K562 (cell line): ENCODE measurements at regions of chr5 and their contacts with region 1.

Region 1: DNA sequence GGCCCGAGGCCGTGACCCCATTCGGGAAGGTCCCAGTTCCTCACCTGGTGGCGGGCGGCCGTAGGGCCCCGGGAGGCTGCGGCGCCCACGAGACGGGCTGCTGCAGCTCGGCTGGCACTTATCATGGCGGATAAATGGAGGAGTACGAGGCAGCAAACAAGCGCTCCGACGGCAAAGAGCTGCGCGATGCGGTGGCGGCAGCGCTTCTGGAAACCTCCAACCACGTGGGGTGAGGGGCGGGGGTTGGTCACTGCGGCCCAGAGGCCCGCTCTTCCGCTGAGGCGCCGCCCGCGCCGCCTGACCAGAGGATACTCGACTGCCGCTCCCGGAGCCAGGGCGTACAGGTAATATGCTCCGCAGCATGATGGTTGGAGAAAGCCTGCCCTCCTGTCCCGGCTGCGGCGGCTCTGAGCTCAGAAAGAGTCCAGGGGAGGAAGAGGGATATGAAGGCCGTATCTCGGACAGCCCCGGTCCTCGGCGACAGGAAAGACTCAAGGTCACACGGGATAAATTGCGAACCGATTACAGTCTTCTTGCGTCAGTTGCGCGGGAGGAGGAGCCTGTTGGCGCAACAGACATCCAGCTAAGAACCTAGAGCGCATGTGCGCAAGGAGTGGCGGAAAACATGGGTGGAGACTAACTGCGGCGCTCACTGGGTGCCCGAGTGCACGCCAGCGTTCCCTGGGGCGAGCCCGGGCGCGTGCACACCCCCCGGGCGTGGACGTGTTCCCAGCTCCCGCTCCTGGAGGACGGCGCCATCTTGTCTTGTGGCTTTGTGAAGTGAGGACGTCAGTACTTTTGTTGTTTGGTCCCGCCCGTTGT is at the start of gene HSPA9:
- DNase-seq: peak; percentile 97 to 100 (median 98)
- ATAC-seq: peak; percentile 90
- H3K4me3 ChIP-seq: peak within 1 kb of the TSS; percentile 72
- H3K27ac ChIP-seq: peak within 1 kb of the TSS; percentile 97
- H3K4me1 ChIP-seq: peaks cover 11 to 21% of the 10 kb centered on the region in 2 experiments; a peak in 4 of 5 replicates
- H3K27me3 ChIP-seq: no peaks in the 10 kb centered on the region
- CTCF ChIP-seq: no peak; a peak in 1 of 6 replicates
- EP300 ChIP-seq: peak; percentile 88
- POLR2A ChIP-seq: peak; percentile 95
- RAD21 ChIP-seq: peak in 1 of 2 experiments; percentile 13; a peak in 1 of 4 replicates
- polyA plus RNA-seq, gene HSPA9: 195 to 294 TPM

Region 2: GRCh38 chr5:138542956-138543729 is 32.3 kb before region 1 on chr5 and contains the start of gene ETF1:
- CTCF ChIA-PET with region 1: no interaction called
- POLR2A ChIA-PET with region 1: interaction called, 18 read pairs
- in situ Hi-C with region 1: no loop called
- intact Hi-C with region 1: no loop called
- DNase-seq: peak; percentile 98 to 100 (median 99)
- ATAC-seq: peak; percentile 88
- H3K4me3 ChIP-seq: peak within 1 kb of the TSS; percentile 97
- H3K27ac ChIP-seq: peak within 1 kb of the TSS; percentile 97
- H3K4me1 ChIP-seq: peaks cover 7 to 36% of the 10 kb centered on the region in 2 experiments
- H3K27me3 ChIP-seq: no peaks in the 10 kb centered on the region
- CTCF ChIP-seq: 0 out of 6 replicates have a peak, but pooled peaks of 1 of the 3 experiments have one; percentile 8
- EP300 ChIP-seq: 0 out of 2 replicates have a peak, but pooled peaks have one; percentile 13
- POLR2A ChIP-seq: peak; percentile 94
- RAD21 ChIP-seq: no peak
- polyA plus RNA-seq, gene ETF1: 53.7 to 57.3 TPM

Region 3: DNA sequence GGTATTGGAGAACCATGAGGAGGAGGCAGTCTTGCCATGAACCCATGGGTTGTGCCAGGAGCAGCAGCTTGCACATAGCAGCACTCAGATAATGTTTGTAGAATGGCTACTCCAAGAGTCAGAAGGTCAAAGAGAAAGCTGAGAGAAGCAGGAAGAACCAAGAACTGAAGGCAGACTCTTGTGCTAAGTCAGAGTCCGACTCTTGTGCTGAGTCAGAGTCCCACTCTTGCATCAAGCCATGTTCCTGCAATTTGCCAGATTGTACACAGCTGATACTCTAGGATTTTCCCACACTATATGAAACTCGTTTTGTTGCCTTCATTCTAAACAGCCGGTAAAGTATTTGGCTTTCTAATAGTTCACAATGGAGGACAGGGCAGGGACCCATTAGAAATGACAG is 26.0 kb after region 1 on chr5:
- CTCF ChIA-PET with region 1: no interaction called
- POLR2A ChIA-PET with region 1: interaction called, 13 read pairs
- in situ Hi-C with region 1: no loop called
- intact Hi-C with region 1: no loop called
- DNase-seq: peak in 1 of 4 experiments; percentile 48
- ATAC-seq: peak; percentile 87
- H3K4me3 ChIP-seq: no peak overlapping the region
- H3K27ac ChIP-seq: no peak overlapping the region
- H3K4me1 ChIP-seq: peaks cover 0 to 6% of the 10 kb centered on the region in 2 experiments; a peak in 3 of 5 replicates
- H3K27me3 ChIP-seq: peaks cover 21 to 24% of the 10 kb centered on the region in 2 experiments
- CTCF ChIP-seq: no peak
- EP300 ChIP-seq: no peak
- POLR2A ChIP-seq: no peak
- RAD21 ChIP-seq: no peak

Region 4: DNA sequence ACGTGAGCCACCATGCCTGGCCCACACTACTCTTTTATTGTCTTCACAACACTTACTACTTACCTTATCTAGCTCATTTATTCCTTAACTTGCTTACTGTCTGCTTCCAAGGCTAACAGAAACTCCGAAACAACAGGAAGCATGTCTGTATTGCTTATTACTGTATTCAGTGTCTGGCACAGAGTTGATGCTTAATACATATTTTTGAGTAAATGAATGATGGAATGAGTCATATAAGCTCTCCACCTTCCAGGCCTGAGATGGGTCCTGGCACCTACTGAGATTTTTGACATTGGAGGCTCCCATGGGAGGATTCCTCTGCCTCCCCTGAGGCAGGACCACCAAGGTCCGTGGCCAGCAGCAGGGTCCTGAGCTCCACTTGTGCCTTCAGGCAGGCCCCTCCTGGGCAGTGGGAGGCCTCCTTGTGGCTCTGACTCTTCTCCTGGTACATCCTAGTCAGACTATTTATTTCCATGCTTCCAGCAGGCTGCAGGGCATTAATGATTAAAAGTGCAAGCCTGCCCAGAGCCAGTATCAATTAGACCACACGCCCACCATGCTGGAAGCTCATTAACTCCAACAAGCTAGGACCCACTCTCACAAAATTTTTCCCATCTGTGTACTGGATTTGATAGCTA is 101.3 kb after region 1 on chr5:
- CTCF ChIA-PET with region 1: no interaction called
- POLR2A ChIA-PET with region 1: no interaction called
- in situ Hi-C with region 1: no loop called
- intact Hi-C with region 1: no loop called
- DNase-seq: no peak
- ATAC-seq: no peak
- H3K4me3 ChIP-seq: no peak overlapping the region
- H3K27ac ChIP-seq: no peak overlapping the region
- H3K4me1 ChIP-seq: no peaks in the 10 kb centered on the region
- H3K27me3 ChIP-seq: peaks cover 0 to 5% of the 10 kb centered on the region in 2 experiments; a peak in 1 of 5 replicates
- CTCF ChIP-seq: no peak
- EP300 ChIP-seq: no peak
- POLR2A ChIP-seq: no peak
- RAD21 ChIP-seq: no peak

Region 5: GRCh38 chr5:138702308-138703077 is 127.1 kb after region 1 on chr5:
- CTCF ChIA-PET with region 1: no interaction called
- POLR2A ChIA-PET with region 1: no interaction called
- in situ Hi-C with region 1: no loop called
- intact Hi-C with region 1: loop called (anchors 5 kb)
- DNase-seq: no peak
- ATAC-seq: peak; percentile 84
- H3K4me3 ChIP-seq: no peak overlapping the region
- H3K27ac ChIP-seq: no peak overlapping the region
- H3K4me1 ChIP-seq: peaks cover 3 to 18% of the 10 kb centered on the region in 2 experiments; a peak in 4 of 5 replicates
- H3K27me3 ChIP-seq: no peaks in the 10 kb centered on the region
- CTCF ChIP-seq: peak in 1 of 3 experiments; percentile 12; a peak in 2 of 6 replicates
- EP300 ChIP-seq: peak; percentile 92
- POLR2A ChIP-seq: no peak
- RAD21 ChIP-seq: peak; percentile 16 to 51; a peak in 2 of 4 replicates

Region 6: DNA sequence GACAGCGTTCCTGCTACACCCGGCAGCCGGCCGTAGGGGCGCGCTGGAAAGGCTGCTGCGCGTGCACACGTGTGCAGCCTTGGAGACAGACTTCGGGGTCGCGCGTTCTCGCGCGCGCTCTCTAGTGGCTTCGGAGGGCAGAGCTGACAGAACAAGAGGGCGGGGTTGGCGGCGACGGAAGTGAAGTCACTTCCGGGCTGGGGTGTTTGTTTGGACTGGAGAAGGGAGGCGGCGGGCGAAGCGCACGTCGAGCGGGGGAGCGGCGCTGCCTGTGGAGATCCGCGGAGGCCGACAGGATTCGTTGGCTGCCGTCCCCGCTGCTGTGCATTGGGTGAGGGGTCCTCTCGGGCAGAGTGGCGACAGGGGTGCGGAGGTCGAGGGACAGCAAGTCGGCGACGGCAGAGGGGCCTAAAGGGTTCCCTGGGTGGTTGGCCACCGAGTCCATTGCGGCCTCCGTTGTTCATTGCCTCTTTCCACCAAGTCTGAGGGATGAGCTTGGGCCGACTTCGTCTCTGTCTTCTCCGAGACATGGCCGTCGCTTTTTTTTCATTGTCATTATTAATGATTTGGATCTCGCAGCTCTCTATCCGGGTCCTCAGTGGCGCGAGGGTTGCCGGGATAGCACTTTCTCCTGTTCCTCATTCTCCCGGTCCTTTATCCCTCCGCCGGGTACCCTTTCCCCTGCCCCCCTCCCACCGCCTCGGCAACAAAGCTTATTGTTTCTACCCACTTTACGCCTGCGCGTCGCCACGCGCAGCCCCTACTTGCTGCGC is 766.4 kb after region 1 on chr5 and contains the start of gene PAIP2:
- CTCF ChIA-PET with region 1: no interaction called
- POLR2A ChIA-PET with region 1: interaction called, 3 read pairs
- in situ Hi-C with region 1: no loop called
- intact Hi-C with region 1: loop called (anchors 5 kb)
- DNase-seq: peak; percentile 89 to 100 (median 92)
- ATAC-seq: peak; percentile 88
- H3K4me3 ChIP-seq: peak within 1 kb of the TSS; percentile 86
- H3K27ac ChIP-seq: peak within 1 kb of the TSS; percentile 100
- H3K4me1 ChIP-seq: peaks cover 11 to 13% of the 10 kb centered on the region in 2 experiments; a peak in 4 of 5 replicates
- H3K27me3 ChIP-seq: no peaks in the 10 kb centered on the region
- CTCF ChIP-seq: peak; percentile 88 to 97 (median 97)
- EP300 ChIP-seq: no peak; the same call in 1 of the 2 replicates
- POLR2A ChIP-seq: peak; percentile 97
- RAD21 ChIP-seq: peak; percentile 36 to 55
- polyA plus RNA-seq, gene PAIP2: 152 to 180 TPM